WTC11 (cell line): ENCODE measurements at regions of chr17 and their contacts with region 1.

Region 1: GRCh38 chr17:32659419-32659842 is 172.6 kb downstream of the CDK5R1 start:
- DNase-seq: peak; percentile 83
- ATAC-seq: peak; percentile 76
- H3K4me3 Mint-ChIP-seq: no peak overlapping the region
- H3K27ac Mint-ChIP-seq: no peak overlapping the region
- H3K4me1 Mint-ChIP-seq: peaks cover 2% of the 10 kb centered on the region; the same call in 1 of the 2 replicates
- H3K27me3 Mint-ChIP-seq: no peaks in the 10 kb centered on the region
- CTCF ChIP-seq: peak; percentile 91

Region 2: DNA sequence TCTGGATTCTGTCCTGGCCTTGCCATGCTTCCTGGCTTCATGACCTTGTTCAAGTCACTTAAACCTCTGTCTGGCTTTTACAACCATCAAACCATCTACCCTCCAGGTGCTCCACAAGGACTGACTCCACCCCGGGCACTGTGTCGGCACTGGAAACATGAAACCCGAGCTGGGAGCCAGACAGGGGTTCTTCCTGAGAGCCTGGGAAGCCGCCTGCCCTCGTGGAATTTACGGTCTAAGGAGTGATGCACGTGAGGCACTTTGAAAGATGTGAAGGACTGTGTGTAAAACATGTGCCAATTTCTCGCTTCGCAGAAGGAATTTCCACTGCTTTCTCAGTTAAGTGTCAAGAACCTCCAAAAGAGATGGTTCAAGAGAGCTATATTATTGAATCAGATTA is 161.0 kb before region 1 on chr17:
- CTCF ChIA-PET with region 1: no interaction called
- POLR2A ChIA-PET with region 1: no interaction called
- DNase-seq: peak; percentile 56
- ATAC-seq: peak; percentile 61
- H3K4me3 Mint-ChIP-seq: no peak overlapping the region
- H3K27ac Mint-ChIP-seq: no peak overlapping the region
- H3K4me1 Mint-ChIP-seq: peaks cover 15% of the 10 kb centered on the region
- H3K27me3 Mint-ChIP-seq: no peaks in the 10 kb centered on the region
- CTCF ChIP-seq: no peak

Region 3: GRCh38 chr17:32588982-32589381 is 70.4 kb before region 1 on chr17:
- CTCF ChIA-PET with region 1: interaction called, 13 read pairs
- POLR2A ChIA-PET with region 1: no interaction called
- DNase-seq: peak; percentile 46
- ATAC-seq: peak; percentile 86
- H3K4me3 Mint-ChIP-seq: no peak overlapping the region
- H3K27ac Mint-ChIP-seq: no peak overlapping the region
- H3K4me1 Mint-ChIP-seq: peaks cover 3% of the 10 kb centered on the region; the same call in 1 of the 2 replicates
- H3K27me3 Mint-ChIP-seq: no peaks in the 10 kb centered on the region
- CTCF ChIP-seq: peak; percentile 54

Region 4: DNA sequence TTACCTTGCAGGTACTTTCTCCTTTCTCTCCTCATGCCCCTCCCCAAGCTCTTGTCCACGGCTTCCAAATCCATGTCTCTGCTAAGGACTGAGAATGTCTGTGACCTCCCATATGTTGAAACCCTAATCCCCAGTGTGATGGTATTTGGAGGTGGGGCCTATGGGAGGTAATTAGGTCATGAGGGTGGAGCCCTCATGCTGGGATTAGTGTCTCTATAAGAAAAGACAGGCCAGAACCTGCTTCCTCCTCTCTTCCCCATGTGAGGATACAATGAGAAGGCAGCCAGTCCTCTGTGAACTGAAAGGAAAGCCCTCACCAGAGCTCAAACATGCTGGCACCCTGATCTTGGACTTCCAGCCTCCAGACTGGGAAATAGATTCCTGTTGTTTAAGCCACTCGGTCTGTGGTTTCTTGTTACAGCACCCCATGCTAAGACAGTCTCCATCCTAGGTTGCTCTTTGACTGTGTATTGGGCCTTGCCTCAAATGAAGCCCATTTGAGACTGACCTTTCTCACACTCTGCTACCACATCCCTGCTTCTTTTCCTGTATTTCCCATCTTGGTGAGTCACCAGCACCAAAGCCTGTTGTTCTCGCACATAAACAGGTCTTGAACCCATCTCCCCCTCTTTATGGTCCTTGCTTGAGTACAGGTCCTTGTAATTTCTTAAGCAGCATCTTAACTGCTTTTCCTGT is 37.7 kb before region 1 on chr17:
- CTCF ChIA-PET with region 1: interaction called, 11 read pairs
- POLR2A ChIA-PET with region 1: no interaction called
- DNase-seq: peak; percentile 41
- ATAC-seq: peak; percentile 91
- H3K4me3 Mint-ChIP-seq: no peak overlapping the region
- H3K27ac Mint-ChIP-seq: peak overlapping the region; percentile 29; the same call in 1 of the 2 replicates
- H3K4me1 Mint-ChIP-seq: peaks cover 27% of the 10 kb centered on the region
- H3K27me3 Mint-ChIP-seq: peaks cover 6% of the 10 kb centered on the region
- CTCF ChIP-seq: no peak

Region 5: GRCh38 chr17:32671896-32672295 is 12.5 kb after region 1 on chr17:
- CTCF ChIA-PET with region 1: interaction called, 23 read pairs
- POLR2A ChIA-PET with region 1: no interaction called
- DNase-seq: no peak
- ATAC-seq: no peak
- H3K4me3 Mint-ChIP-seq: no peak overlapping the region
- H3K27ac Mint-ChIP-seq: no peak overlapping the region
- H3K4me1 Mint-ChIP-seq: peaks cover 4% of the 10 kb centered on the region; the same call in 1 of the 2 replicates
- H3K27me3 Mint-ChIP-seq: no peaks in the 10 kb centered on the region
- CTCF ChIP-seq: no peak

Region 6: DNA sequence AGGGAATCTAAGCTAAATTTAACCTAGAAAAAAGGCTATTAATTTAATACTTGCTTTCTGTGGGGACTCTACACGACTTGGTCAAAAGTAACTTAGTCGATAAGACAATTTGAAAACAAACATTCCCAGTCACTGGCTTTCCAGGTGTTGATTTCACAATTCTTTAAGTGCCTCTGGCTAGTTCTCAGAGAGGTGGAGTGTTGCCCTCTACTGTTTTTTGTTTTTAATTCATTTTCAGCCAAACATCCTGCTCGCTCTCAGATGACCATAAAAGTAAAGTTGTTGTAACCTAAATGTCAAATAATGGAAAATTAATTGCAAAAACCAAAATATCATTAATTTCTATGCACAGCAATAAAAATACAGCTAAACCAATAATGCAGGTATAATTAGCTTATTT is 110.4 kb after region 1 on chr17:
- CTCF ChIA-PET with region 1: interaction called, 12 read pairs
- POLR2A ChIA-PET with region 1: no interaction called
- DNase-seq: no peak
- ATAC-seq: peak; percentile 26; the same call in 1 of the 2 replicates
- H3K4me3 Mint-ChIP-seq: no peak overlapping the region
- H3K27ac Mint-ChIP-seq: no peak overlapping the region
- H3K4me1 Mint-ChIP-seq: peaks cover 14% of the 10 kb centered on the region
- H3K27me3 Mint-ChIP-seq: no peaks in the 10 kb centered on the region
- CTCF ChIP-seq: no peak

Region 7: GRCh38 chr17:32894245-32894644 is 234.8 kb after region 1 on chr17:
- CTCF ChIA-PET with region 1: no interaction called
- POLR2A ChIA-PET with region 1: no interaction called
- DNase-seq: no peak
- ATAC-seq: no peak
- H3K4me3 Mint-ChIP-seq: no peak overlapping the region
- H3K27ac Mint-ChIP-seq: no peak overlapping the region
- H3K4me1 Mint-ChIP-seq: no peaks in the 10 kb centered on the region
- H3K27me3 Mint-ChIP-seq: peaks cover 5% of the 10 kb centered on the region; the same call in 1 of the 2 replicates
- CTCF ChIP-seq: no peak